ENCODE measurements at regions of chr9 and their contacts with region 1.

Region 1: DNA sequence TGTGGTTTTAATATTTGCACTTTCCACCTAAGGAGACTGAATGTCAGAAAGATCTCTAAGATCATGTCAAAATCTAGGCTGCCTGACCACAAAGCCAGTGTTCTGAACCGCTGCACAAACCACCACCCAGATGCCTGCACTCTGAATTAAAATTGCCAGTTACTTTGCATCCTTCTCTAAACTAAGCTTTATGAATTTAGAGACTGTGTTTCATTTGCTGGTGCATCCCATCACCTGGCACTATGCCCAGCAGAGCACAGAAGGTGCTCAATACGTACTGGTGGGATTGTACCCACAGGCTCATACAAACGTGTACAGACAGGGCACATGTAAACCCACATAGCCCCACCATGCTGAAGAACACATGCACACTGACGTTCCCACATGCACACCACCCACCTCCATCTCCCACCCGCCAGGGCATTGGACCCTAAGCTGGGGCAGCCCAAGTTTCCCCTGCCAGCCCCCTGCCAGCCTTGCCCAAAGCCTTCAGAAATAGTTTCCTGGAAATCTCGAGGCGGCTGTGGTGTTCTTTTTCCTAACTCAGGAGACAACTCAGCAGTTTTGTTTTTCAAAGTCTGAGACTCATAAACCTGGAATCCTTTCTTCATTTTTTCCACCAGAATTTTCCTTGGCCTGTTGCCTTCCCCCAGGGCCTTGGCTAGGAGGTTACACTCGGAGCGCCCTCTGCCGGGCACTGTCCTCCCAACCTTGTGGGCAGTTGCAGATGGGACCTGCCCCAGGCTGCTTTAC is 9.6 kb upstream of the TRAF1 start:
- DNase-seq: peak; percentile 95
- ATAC-seq: peak; percentile 73
- H3K4me3 Mint-ChIP-seq: peak overlapping the region; percentile 34
- H3K27ac Mint-ChIP-seq: peak overlapping the region; percentile 93
- H3K4me1 Mint-ChIP-seq: peaks cover 62% of the 10 kb centered on the region
- H3K27me3 Mint-ChIP-seq: no peaks in the 10 kb centered on the region

Region 2: DNA sequence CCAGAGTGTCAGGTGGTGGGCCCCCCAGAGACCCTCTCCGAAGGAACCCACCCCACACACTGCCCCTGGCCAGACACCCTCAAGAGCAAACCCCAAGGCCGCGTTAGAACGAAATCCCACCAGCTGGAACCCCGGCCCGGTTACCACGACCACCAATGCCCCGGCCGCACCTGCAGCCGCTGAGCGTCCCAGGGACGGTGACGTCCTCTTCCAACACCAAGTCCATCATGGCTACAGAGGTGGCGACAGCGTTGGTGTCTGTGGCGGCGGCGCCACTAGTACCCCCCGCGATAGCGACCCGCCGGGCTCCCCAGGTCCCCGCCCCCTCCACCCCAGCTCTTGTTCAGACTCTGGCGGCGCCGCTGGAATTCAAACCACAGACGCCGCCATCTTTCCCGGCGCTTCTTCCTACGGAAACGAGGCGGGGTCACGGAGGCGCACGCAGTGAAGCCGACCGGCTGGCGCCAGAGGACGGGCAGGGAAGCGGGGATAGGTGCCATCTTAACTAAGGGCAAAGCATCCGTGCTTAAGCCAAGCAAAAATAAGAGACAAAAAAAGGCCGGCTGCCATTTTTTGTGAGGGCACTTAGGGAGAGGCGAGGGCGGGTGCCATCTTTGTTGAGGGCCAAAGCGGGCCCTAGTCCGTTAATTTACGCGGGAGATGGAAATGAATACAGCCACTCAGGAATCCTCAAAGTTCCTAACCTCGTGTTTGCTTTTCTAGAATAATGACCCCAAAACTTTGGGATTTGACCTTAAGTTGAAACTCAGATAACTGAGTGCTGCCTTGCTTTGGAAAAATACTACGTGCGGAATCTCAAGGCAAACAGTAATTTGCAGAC is 356.2 kb before region 1 on chr9 and contains the start of gene CDK5RAP2:
- CTCF ChIA-PET with region 1: no interaction called
- POLR2A ChIA-PET with region 1: no interaction called
- intact Hi-C with region 1: loop called in 1 of 2 experiments (anchors 10 kb)
- DNase-seq: peak; percentile 96
- ATAC-seq: peak; percentile 99
- H3K4me3 Mint-ChIP-seq: peak within 1 kb of the TSS; percentile 99
- H3K27ac Mint-ChIP-seq: peak within 1 kb of the TSS; percentile 94
- H3K4me1 Mint-ChIP-seq: peaks cover 40% of the 10 kb centered on the region
- H3K27me3 Mint-ChIP-seq: no peaks in the 10 kb centered on the region
- total RNA-seq, gene CDK5RAP2: 68.8 to 85.8 TPM

Region 3: DNA sequence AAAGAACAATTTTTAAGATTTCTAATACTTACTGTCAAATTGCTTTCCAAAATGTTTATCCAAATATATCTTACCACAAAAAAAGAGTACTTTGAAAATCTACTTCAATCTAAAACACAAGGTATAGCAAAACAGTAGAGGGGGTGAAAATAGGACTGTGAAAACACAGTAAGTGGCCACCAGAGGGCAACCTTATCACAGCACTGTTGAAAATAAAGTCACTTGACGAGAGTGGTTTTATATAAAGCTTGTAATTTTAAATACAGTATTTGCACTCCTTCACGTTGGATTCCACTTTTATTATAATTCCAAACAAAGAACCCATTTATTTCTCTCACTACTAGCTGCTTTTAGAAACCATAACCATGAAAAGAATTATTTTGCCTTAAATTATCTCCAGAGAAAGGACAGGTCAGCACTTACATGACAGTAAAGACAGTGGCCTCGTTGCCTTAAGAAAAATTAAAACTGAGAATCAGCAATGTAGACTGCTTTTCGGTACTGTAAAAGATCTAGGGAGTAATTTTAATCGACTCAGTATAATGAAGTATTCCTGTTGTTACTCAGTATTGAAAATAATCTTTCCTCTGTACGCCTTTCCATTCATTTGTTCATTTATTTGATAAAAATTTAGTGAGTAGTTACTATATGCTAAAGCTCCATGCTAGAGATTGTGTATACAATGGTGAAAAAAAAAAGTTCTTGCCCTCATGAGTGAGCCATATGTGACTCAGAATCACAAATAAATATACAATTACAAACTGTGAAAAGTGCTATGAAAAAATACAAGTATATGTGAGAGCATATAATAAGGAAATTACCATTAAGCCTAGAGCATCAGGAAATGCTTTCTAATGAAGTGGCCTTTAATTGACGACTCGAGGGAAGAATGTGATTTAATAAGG is 316.2 kb before region 1 on chr9:
- CTCF ChIA-PET with region 1: no interaction called
- POLR2A ChIA-PET with region 1: no interaction called
- intact Hi-C with region 1: loop called in 1 of 2 experiments (anchors 5 kb)
- DNase-seq: peak; percentile 74
- ATAC-seq: peak; percentile 84
- H3K4me3 Mint-ChIP-seq: no peak overlapping the region
- H3K27ac Mint-ChIP-seq: no peak overlapping the region
- H3K4me1 Mint-ChIP-seq: peaks cover 5% of the 10 kb centered on the region
- H3K27me3 Mint-ChIP-seq: no peaks in the 10 kb centered on the region

Region 4: DNA sequence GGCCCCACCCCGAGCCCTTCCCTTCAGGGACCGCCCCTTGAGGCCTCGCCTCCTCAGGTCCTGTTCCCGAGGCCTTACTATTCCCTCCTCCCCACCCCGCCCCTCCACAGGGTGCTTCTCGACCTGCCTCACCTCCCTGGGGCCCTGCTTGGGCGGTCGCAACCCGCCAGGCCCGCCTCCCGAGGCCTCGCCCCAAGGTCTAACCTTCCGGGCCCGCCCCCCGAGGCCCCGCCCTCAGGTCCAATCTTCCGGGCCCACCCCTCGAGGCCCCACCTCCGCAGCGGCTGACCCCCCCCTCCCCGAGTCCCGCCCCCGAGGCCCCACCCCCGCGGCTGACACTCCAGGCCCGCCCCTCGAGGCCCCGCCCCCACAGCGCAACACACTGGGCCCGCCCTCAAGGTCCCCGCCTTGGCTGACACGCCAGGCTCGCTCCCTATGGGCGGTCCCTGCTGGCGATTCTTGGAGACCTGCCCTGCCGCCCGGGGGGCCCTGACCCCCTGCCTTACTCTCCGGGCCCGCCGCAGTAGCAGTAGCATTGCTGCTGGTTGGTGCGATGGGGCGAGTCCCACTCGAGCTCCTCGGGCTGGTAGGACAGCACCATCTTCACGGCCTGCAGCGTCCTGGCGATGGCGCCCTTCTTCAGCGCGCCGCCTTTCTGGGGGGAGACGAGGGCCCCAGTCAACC is 67.4 kb before region 1 on chr9:
- CTCF ChIA-PET with region 1: interaction called, 7 read pairs
- POLR2A ChIA-PET with region 1: interaction called, 4 read pairs
- intact Hi-C with region 1: loop called (anchors 1 to 2 kb)
- DNase-seq: peak; percentile 99
- ATAC-seq: peak; percentile 94
- H3K4me3 Mint-ChIP-seq: peak overlapping the region; percentile 64
- H3K27ac Mint-ChIP-seq: peak overlapping the region; percentile 70
- H3K4me1 Mint-ChIP-seq: peaks cover 40% of the 10 kb centered on the region
- H3K27me3 Mint-ChIP-seq: no peaks in the 10 kb centered on the region

Region 5: DNA sequence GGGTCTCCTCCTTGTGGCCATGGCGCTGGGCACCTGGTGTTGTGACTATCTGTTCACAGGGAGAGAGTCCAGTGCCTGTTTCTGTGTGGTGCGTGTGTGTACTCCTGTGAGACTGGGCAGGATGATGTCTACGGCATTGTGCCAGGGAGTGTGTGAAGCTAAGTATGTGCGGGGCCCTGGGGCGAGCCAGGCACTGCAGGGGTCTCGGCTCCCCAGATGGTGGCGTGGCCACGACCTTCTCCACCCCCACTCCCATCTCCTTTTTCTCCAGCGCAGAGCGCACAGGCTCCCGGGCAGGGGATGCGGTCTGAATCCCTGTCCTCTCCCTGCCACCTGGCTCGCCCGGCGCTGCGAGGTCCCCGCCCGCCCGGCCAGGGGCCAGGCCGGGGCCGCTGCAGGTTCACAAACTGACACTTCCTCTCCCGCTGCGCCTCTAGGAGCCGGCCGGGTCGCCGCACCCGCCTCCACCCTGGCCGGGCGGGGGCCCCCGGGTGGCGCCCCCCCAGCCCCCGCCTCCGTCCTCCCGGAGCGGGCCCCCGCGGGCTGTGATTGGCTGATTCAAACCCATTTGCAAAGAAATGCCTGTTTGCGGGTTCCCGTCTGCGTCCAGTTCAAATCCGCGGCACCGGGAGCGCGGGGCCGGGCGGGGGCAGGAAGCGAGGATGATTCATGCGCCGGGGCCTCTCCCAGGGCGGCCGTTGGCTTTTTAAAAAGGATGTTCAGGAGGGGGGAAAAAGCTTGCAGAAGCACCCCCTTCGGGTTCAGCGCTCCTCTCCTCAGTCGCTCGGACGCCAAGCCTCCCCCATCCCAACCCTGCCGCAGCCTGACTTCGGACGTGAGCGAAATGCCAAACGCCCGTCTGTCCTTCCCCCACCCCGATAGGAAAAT is 60.0 kb before region 1 on chr9:
- CTCF ChIA-PET with region 1: interaction called, 7 read pairs
- POLR2A ChIA-PET with region 1: interaction called, 6 read pairs
- intact Hi-C with region 1: loop called in 1 of 2 experiments (anchors 1 kb)
- DNase-seq: peak; percentile 95
- ATAC-seq: peak; percentile 59
- H3K4me3 Mint-ChIP-seq: peak overlapping the region; percentile 85
- H3K27ac Mint-ChIP-seq: peak overlapping the region; percentile 94
- H3K4me1 Mint-ChIP-seq: peaks cover 73% of the 10 kb centered on the region
- H3K27me3 Mint-ChIP-seq: no peaks in the 10 kb centered on the region

Region 6: DNA sequence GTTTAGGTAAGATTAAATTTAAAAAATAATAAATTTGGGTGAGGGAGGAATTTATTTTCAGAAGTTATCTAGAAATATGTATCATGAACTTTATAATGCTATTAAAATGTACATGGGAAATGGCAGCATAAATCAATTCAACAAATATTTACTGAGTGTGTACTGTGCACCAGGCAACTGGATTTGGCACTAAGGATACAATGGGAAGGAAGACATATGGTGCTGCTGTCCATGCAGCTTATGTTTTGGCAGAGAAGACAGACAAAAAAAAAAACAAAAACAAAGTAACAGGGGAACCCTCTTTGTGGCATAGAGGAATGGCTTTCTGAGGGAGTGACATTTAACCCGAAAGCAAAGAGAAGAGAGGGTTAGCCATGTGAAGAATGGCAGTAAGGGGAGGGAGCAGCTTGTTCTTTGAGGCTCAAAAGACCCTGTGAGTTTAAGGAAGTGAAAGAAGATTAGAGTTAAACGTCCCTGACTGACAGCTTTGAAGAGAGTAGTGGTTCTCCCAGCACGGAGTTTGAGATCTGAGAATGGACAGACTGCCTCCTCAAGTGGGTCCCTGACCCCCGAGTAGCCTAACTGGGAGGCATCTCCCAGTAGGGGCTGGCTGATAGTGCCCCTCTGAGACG is 162.5 kb after region 1 on chr9:
- CTCF ChIA-PET with region 1: no interaction called
- POLR2A ChIA-PET with region 1: no interaction called
- intact Hi-C with region 1: no loop called
- DNase-seq: no peak
- ATAC-seq: no peak
- H3K4me3 Mint-ChIP-seq: no peak overlapping the region
- H3K27ac Mint-ChIP-seq: no peak overlapping the region
- H3K4me1 Mint-ChIP-seq: no peaks in the 10 kb centered on the region
- H3K27me3 Mint-ChIP-seq: no peaks in the 10 kb centered on the region

Measured in activated CD4-positive, alpha-beta T cell treated with anti-CD3 and anti-CD28 coated beads for 36 hours (primary cell).